CD8-positive, alpha-beta T cell (primary cell): ENCODE measurements at regions of chr4 and their contacts with region 1.

Region 1: DNA sequence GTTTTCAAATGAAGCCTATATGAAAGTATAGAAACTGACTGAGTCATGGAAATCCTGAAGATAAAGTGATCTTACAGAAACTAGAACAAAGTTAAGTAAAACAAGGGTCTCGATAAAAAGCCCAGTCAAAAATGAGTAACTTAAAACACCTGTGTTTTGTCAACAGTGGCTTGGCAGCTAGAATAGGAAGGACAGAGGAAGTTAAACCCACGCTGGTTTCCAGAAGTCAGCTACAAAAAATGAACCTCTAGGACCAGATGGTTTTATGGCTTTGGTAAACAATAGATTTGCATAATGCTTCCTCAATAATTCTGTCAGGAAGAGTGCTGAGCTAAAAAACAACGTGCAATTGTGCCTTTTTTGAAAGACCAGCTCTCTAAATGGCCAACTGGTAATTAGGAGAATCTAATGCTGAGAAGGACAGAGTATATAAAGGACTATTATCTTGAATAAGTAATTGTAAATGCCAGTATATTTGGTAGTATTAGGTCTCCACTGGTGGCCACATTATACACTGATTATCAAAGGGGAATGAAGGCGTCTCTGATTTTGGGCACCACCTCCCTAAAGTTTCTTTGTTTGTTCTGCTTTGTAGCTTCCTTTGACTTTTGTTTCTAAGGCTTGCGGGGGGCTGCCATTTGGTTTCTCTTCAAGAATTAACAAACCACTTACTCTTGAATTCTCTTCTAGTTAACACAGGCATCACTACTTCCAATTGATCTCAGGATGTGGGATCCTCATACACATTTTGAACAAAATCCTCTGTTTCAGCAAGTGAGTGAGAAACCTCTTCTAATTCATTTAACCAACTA is 72.2 kb upstream of the PPP3CA start:
- DNase-seq: peak in 1 of 9 experiments; percentile 40
- ATAC-seq: no peak
- H3K4me3 ChIP-seq: no peak overlapping the region
- H3K4me3 Mint-ChIP-seq: no peak overlapping the region
- H3K27ac ChIP-seq: no peak overlapping the region
- H3K27ac Mint-ChIP-seq: no peak overlapping the region
- H3K4me1 ChIP-seq: peaks cover 43% of the 10 kb centered on the region
- H3K4me1 Mint-ChIP-seq: peaks cover 39% of the 10 kb centered on the region
- H3K27me3 ChIP-seq: peaks cover 0 to 4% of the 10 kb centered on the region in 2 experiments
- H3K27me3 Mint-ChIP-seq: peaks cover 42% of the 10 kb centered on the region
- CTCF ChIP-seq: no peak

Region 2: GRCh38 chr4:101527188-101527587 is 107.7 kb after region 1 on chr4:
- CTCF ChIA-PET with region 1: no interaction called
- POLR2A ChIA-PET with region 1: no interaction called
- intact Hi-C with region 1: loop called in 1 of 2 experiments (anchors 10 kb)
- DNase-seq: peak in 8 of 9 experiments; percentile 19 to 93 (median 54)
- ATAC-seq: peak; percentile 93
- H3K4me3 ChIP-seq: no peak overlapping the region
- H3K4me3 Mint-ChIP-seq: no peak overlapping the region
- H3K27ac ChIP-seq: no peak overlapping the region
- H3K27ac Mint-ChIP-seq: peak overlapping the region; percentile 28
- H3K4me1 ChIP-seq: peaks cover 16% of the 10 kb centered on the region
- H3K4me1 Mint-ChIP-seq: peaks cover 16% of the 10 kb centered on the region
- H3K27me3 ChIP-seq: peaks cover 0 to 7% of the 10 kb centered on the region in 2 experiments
- H3K27me3 Mint-ChIP-seq: peaks cover 29% of the 10 kb centered on the region
- CTCF ChIP-seq: no peak